ENCODE measurements at regions of chr19 and their contacts with region 1.

Region 1: DNA sequence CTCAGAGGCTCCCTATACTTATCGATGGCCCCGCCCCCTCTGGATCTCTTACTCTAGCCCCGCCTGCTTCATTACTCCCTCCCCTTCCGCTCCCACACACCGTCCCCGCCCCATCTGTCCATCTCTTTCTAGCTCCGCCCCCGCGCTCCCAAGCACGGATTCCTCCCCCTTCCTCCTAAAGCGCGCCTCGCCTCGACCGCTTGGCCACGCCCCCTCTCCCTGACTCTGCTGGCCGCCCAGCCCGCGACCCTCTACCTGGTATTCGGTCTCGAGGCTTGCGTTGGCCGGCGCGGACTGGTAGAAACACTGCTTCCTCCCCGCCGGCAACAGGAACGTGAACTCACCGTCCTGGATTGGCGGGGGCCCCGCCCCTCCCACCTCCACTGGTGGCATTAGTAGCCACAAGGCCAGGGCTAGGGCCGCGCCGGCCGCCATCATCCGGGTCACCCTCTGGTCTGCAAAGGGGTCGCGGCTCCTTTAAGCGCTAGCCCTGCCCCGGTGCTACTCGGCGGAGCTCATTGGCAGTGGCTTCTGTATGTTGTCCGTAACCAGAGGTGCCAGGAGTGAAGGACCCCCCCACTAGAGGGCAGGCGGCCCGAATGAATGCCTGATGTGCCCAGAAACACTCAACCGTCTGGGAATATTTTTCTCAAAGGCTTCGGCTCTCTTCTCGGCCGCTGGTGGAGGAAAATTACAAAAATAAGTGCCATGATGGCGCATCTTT is at the start of gene TMED1:
- DNase-seq: peak; percentile 100
- H3K4me3 ChIP-seq: peak within 1 kb of the TSS; percentile 74
- H3K27ac ChIP-seq: peak within 1 kb of the TSS; percentile 84
- H3K4me1 ChIP-seq: peaks cover 26% of the 10 kb centered on the region
- CTCF ChIP-seq: peak; percentile 39; the same call in 1 of the 2 replicates
- total RNA-seq, gene TMED1: 20.8 and 22.5 TPM in 2 replicates

Region 2: GRCh38 chr19:10769533-10770491 is 66.1 kb before region 1 on chr19:
- CTCF ChIA-PET with region 1: no interaction called
- POLR2A ChIA-PET with region 1: no interaction called
- intact Hi-C with region 1: no loop called
- DNase-seq: peak; percentile 21
- H3K4me3 ChIP-seq: no peak overlapping the region
- H3K27ac ChIP-seq: no peak overlapping the region
- H3K4me1 ChIP-seq: peaks cover 22% of the 10 kb centered on the region
- CTCF ChIP-seq: 0 out of 2 replicates have a peak, but pooled peaks have one; percentile 29

Region 3: DNA sequence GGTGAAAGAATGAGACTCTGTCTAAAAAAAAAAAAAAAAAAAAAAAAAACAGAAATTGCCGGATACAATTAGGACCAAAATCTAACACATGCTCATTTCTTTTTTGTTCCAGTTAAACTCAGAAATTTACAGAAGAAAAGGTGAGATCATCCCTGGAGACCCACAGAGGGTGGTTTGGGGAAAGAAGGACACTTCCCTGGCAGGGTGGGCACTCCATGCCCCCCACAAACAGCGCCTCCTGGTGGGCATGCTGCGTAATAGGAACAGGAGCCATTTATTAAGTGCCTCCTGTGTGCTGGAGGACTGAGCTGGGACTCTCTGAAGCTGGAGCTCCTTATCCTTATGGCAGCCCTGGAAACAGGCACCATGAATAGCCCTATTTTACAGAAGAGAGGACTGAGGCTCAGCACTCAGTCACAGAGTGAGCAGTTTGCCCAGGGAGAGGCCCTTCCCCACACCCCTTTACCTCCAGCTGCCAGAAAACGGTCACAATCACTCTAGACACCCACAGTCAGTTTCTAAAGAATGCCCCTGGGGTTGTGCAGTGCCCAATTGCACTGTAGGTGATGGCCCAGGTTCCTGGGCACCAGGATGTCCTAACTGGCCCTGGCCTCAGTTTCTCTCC is 22.4 kb after region 1 on chr19:
- CTCF ChIA-PET with region 1: interaction called, 10 read pairs
- POLR2A ChIA-PET with region 1: interaction called, 4 read pairs
- intact Hi-C with region 1: no loop called
- DNase-seq: peak; percentile 73
- H3K4me3 ChIP-seq: no peak overlapping the region
- H3K27ac ChIP-seq: no peak overlapping the region
- H3K4me1 ChIP-seq: peaks cover 5% of the 10 kb centered on the region
- CTCF ChIP-seq: peak; percentile 96

Region 4: DNA sequence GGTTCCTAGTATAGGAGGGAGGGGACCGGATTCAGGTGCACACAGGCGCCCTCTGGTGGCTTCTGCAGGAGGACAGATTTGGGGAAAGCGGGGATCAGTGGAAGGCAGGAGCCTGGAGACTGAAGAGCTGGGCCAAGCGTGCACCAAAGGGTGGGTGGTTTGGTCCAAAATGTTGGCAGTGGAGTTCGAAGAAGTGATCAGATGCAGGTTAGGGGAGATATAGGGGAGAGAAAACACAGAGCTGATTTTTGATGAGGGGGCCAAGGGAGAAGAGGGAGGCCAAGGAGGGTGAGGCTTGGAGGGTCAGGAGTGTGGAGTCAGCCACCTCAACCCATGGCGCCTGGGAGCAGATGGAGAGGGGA is 28.6 kb after region 1 on chr19:
- CTCF ChIA-PET with region 1: interaction called, 6 read pairs
- POLR2A ChIA-PET with region 1: interaction called, 6 read pairs
- intact Hi-C with region 1: loop called (anchors 2 kb)
- DNase-seq: peak; percentile 85
- H3K4me3 ChIP-seq: no peak overlapping the region
- H3K27ac ChIP-seq: no peak overlapping the region
- H3K4me1 ChIP-seq: peaks cover 38% of the 10 kb centered on the region
- CTCF ChIP-seq: peak; percentile 98

Region 5: DNA sequence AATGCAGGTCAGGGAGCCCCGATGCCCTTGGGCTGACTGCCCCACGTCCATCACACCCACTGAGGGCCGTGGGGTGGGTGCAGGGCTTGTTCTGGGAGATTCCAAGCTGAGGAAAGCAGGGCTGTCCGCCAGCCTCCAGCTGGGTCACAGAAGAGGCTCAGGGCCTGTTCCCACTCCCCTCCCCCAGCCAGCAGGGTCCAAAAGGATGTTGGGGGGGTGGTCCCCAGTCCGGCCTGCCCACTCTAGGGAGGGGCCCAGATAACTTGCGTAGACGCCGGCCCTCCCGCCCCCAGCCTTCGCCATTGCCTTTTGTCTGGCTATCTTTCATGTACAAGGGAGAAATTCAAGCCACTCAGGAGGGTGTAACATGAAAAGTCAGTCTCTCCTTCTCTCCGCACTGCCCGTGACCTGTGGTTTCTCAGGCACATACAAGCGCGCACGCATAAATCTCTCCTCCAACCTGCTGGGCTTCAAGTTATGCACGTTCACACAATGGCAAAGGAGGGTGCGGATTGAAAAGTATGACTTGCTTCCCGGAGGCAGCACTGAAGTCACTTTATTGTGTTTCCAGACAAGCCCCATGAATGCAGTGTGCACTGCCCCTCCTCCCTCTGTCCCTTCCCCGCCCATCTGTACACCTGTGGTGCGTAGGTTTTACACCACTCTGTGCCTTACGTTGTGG is 55.6 kb after region 1 on chr19:
- CTCF ChIA-PET with region 1: no interaction called
- POLR2A ChIA-PET with region 1: no interaction called
- intact Hi-C with region 1: no loop called
- DNase-seq: no peak
- H3K4me3 ChIP-seq: no peak overlapping the region
- H3K27ac ChIP-seq: no peak overlapping the region
- H3K4me1 ChIP-seq: peaks cover 46% of the 10 kb centered on the region
- CTCF ChIP-seq: no peak